ENCODE measurements at regions of chr4 and their contacts with region 1.

Region 1: GRCh38 chr4:174764105-174764729 is 64.8 kb downstream of the GLRA3 start:
- DNase-seq: peak; percentile 14
- H3K4me3 ChIP-seq: no peak overlapping the region
- H3K27ac ChIP-seq: no peak overlapping the region
- H3K4me1 ChIP-seq: no peaks in the 10 kb centered on the region
- H3K27me3 ChIP-seq: no peaks in the 10 kb centered on the region
- CTCF ChIP-seq: peak; percentile 66 to 67

Region 2: GRCh38 chr4:175166020-175166419 is 401.8 kb after region 1 on chr4:
- CTCF ChIA-PET with region 1: no interaction called
- dilution Hi-C with region 1: no loop called
- in situ Hi-C with region 1: no loop called
- intact Hi-C with region 1: loop called (anchors 10 kb)
- DNase-seq: no peak
- H3K4me3 ChIP-seq: no peak overlapping the region
- H3K27ac ChIP-seq: no peak overlapping the region
- H3K4me1 ChIP-seq: no peaks in the 10 kb centered on the region
- H3K27me3 ChIP-seq: no peaks in the 10 kb centered on the region
- CTCF ChIP-seq: peak in 1 of 2 donors; percentile 22

Region 3: GRCh38 chr4:175253184-175253902 is 489.1 kb after region 1 on chr4:
- CTCF ChIA-PET with region 1: no interaction called
- dilution Hi-C with region 1: no loop called
- in situ Hi-C with region 1: no loop called
- intact Hi-C with region 1: loop called (anchors 1 kb)
- DNase-seq: no peak
- H3K4me3 ChIP-seq: no peak overlapping the region
- H3K27ac ChIP-seq: no peak overlapping the region
- H3K4me1 ChIP-seq: no peaks in the 10 kb centered on the region
- H3K27me3 ChIP-seq: no peaks in the 10 kb centered on the region
- CTCF ChIP-seq: peak in 1 of 2 donors; percentile 36

Region 4: DNA sequence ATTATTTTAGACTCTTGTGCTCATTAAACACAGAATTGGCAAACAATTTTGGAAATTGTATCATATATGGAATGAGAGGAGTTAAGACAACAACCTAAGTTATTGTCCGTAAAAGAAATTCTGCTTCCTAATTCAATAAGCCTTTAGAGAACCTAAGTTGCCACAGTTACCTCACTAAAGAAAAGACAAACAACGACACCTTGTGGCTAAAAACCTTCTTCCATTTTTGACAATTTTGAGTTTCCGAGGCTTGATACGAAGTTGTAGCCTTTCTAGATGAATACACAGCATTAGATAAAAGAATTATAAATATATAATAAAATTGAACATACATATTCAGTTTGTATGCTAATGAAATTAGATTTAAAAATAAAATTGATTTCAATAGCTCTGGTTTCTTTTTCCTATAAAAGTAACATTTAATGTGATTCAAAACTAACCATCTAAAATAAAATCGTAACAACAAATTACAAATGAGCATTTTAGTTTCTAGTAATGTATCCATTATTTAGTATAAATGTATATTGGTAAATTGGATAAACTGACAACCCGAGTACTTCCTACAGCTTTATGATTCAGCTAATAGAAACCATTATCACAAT is 772.7 kb after region 1 on chr4:
- CTCF ChIA-PET with region 1: no interaction called
- dilution Hi-C with region 1: no loop called
- in situ Hi-C with region 1: loop called (anchors 25 kb)
- intact Hi-C with region 1: loop called (anchors 2 kb)
- DNase-seq: peak; percentile 54
- H3K4me3 ChIP-seq: no peak overlapping the region
- H3K27ac ChIP-seq: no peak overlapping the region
- H3K4me1 ChIP-seq: no peaks in the 10 kb centered on the region
- H3K27me3 ChIP-seq: no peaks in the 10 kb centered on the region
- CTCF ChIP-seq: peak; percentile 46 to 63

Measured in mammary epithelial cell (primary cell).